Endothelial cell of umbilical vein (primary cell): ENCODE measurements at regions of chr5 and their contacts with region 1.

Region 1: GRCh38 chr5:153974131-153974812 is 64.4 kb downstream of the FAM114A2 start:
- DNase-seq: peak; percentile 53
- H3K4me3 ChIP-seq: no peak overlapping the region
- H3K27ac ChIP-seq: no peak overlapping the region
- H3K4me1 ChIP-seq: no peaks in the 10 kb centered on the region
- H3K27me3 ChIP-seq: peaks cover 5 to 15% of the 10 kb centered on the region in 2 experiments
- CTCF ChIP-seq: peak; percentile 65 to 74
- POLR2A ChIP-seq: no peak

Region 2: GRCh38 chr5:153745778-153746395 is 228.4 kb before region 1 on chr5:
- CTCF ChIA-PET with region 1: no interaction called
- POLR2A ChIA-PET with region 1: no interaction called
- dilution Hi-C with region 1: no loop called
- intact Hi-C with region 1: no loop called
- DNase-seq: no peak
- H3K4me3 ChIP-seq: no peak overlapping the region
- H3K27ac ChIP-seq: no peak overlapping the region
- H3K4me1 ChIP-seq: no peaks in the 10 kb centered on the region
- H3K27me3 ChIP-seq: no peaks in the 10 kb centered on the region
- CTCF ChIP-seq: no peak
- POLR2A ChIP-seq: no peak

Region 3: GRCh38 chr5:154010660-154011059 is 36.4 kb after region 1 on chr5:
- CTCF ChIA-PET with region 1: no interaction called
- POLR2A ChIA-PET with region 1: no interaction called
- dilution Hi-C with region 1: no loop called
- intact Hi-C with region 1: no loop called
- DNase-seq: no peak
- H3K4me3 ChIP-seq: no peak overlapping the region
- H3K27ac ChIP-seq: no peak overlapping the region
- H3K4me1 ChIP-seq: peaks cover 4% of the 10 kb centered on the region
- H3K27me3 ChIP-seq: no peaks in the 10 kb centered on the region
- CTCF ChIP-seq: no peak
- POLR2A ChIP-seq: no peak

Region 4: GRCh38 chr5:154038707-154039457 is 64.6 kb after region 1 on chr5 and contains the starts of genes FAM114A2 and MFAP3:
- CTCF ChIA-PET with region 1: interaction called, 11 read pairs
- POLR2A ChIA-PET with region 1: interaction called, 3 read pairs
- dilution Hi-C with region 1: no loop called
- intact Hi-C with region 1: loop called (anchors 1 kb)
- DNase-seq: peak; percentile 88
- H3K4me3 ChIP-seq: peak within 1 kb of the TSS; percentile 55 to 87 (median 79)
- H3K27ac ChIP-seq: peak within 1 kb of the TSS; percentile 52
- H3K4me1 ChIP-seq: peaks cover 28% of the 10 kb centered on the region
- H3K27me3 ChIP-seq: no peaks in the 10 kb centered on the region
- CTCF ChIP-seq: no peak
- POLR2A ChIP-seq: peak; percentile 71
- total RNA-seq, gene FAM114A2: 26.6 and 31.3 TPM in 2 replicates
- total RNA-seq, gene MFAP3: 31.7 and 35.3 TPM in 2 replicates

Region 5: DNA sequence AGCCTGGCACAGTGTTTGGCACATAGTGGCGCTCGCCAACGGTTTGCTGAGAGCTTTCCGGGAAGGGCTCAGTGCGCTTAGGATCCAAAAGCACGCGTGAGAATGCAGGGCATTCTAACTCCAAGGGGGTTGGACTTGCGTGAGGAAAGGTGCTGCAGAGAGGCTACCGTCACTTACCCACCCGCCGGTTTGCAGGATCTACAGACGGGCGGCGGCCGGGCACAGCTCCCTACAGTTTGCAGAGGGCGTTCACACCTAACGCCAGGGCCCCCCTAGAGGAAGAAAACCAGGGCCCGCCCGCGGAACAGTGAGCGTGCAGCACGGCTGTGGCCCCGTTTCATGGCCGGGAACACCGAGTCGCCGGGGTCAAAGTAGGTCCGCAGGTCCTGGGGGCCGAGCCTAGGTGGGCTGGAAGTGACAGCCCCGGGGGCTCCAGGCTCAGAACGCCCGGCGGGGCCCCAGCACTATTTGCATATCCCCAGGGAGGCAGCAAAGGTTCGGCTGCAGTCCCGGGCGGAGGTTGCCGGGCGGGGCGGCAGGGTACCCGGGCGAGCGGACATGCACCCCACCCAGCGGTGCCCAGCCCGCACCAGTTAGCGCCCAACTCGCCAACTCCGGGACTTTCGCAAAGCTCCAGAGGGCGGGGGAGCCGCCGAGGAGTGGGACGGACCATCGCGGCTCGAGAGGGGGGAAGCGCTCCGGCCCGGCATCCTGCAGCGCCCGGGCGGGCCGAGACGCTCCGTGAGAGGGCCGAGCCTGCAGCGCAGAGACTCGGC is 215.7 kb after region 1 on chr5:
- CTCF ChIA-PET with region 1: interaction called, 6 read pairs
- POLR2A ChIA-PET with region 1: no interaction called
- dilution Hi-C with region 1: no loop called
- intact Hi-C with region 1: loop called (anchors 2 kb)
- DNase-seq: peak; percentile 55
- H3K4me3 ChIP-seq: peak overlapping the region; percentile 51 to 80 (median 56)
- H3K27ac ChIP-seq: peak overlapping the region; percentile 61
- H3K4me1 ChIP-seq: peaks cover 19% of the 10 kb centered on the region
- H3K27me3 ChIP-seq: no peaks in the 10 kb centered on the region
- CTCF ChIP-seq: peak; percentile 49 to 69
- POLR2A ChIP-seq: peak; percentile 56

Region 6: DNA sequence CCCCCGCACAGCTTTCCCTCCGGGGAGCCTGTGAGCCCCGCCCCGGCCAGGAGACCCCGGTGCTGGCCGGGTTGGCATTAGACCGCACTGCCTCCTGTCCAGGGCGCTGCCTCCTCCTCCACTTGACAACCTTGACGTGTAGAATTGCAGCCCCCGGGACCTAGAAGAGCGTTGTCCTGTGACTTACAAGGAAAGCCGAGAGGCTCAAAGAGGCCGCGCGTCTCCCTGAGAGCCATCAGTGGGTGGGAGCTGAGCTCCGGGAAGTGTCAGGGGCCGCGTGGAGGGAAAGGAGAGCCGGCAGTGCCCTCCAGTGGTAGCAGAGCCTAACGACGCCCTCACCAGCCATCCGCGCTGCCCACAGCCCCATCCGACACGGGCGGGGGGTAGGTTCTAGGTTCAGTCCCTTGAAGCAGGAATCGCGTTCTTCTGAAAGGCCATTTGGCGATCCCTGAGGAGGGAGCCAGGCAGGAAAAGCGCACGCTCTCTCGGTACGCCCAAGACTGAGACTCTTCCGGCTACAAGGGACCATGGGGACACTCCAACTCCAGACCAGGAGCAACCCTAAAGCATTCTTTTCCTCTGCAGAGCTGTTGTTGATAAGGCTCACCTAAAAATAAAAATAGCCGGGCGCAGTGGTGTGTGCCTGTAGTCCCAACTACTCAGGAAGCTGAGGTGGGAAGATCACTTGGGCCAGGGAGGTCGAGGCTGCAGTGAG is 431.0 kb after region 1 on chr5:
- CTCF ChIA-PET with region 1: interaction called, 37 read pairs
- POLR2A ChIA-PET with region 1: no interaction called
- dilution Hi-C with region 1: no loop called
- intact Hi-C with region 1: loop called (anchors 1 kb)
- DNase-seq: peak; percentile 76
- H3K4me3 ChIP-seq: peak overlapping the region in 1 of 3 experiments; percentile 6
- H3K27ac ChIP-seq: no peak overlapping the region
- H3K4me1 ChIP-seq: no peaks in the 10 kb centered on the region
- H3K27me3 ChIP-seq: no peaks in the 10 kb centered on the region
- CTCF ChIP-seq: peak; percentile 88 to 95
- POLR2A ChIP-seq: no peak

Region 7: GRCh38 chr5:154461531-154461930 is 487.3 kb after region 1 on chr5:
- CTCF ChIA-PET with region 1: interaction called, 10 read pairs
- POLR2A ChIA-PET with region 1: no interaction called
- dilution Hi-C with region 1: no loop called
- intact Hi-C with region 1: no loop called
- DNase-seq: no peak
- H3K4me3 ChIP-seq: no peak overlapping the region
- H3K27ac ChIP-seq: no peak overlapping the region
- H3K4me1 ChIP-seq: no peaks in the 10 kb centered on the region
- H3K27me3 ChIP-seq: peaks cover 0 to 2% of the 10 kb centered on the region in 2 experiments
- CTCF ChIP-seq: peak in 1 of 2 donors; percentile 9
- POLR2A ChIP-seq: no peak

Region 8: GRCh38 chr5:154630410-154630809 is 656.1 kb after region 1 on chr5:
- CTCF ChIA-PET with region 1: interaction called, 10 read pairs
- POLR2A ChIA-PET with region 1: interaction called, 3 read pairs
- dilution Hi-C with region 1: no loop called
- intact Hi-C with region 1: no loop called
- DNase-seq: no peak
- H3K4me3 ChIP-seq: no peak overlapping the region
- H3K27ac ChIP-seq: no peak overlapping the region
- H3K4me1 ChIP-seq: no peaks in the 10 kb centered on the region
- H3K27me3 ChIP-seq: peaks cover 2% of the 10 kb centered on the region in 2 experiments
- CTCF ChIP-seq: no peak
- POLR2A ChIP-seq: no peak